Breast epithelium (tissue), 4 donors: ENCODE measurements at regions of chr12 and their contacts with region 1.

Region 1: GRCh38 chr12:11007608-11008007 is 9.5 kb upstream of the TAS2R20 start:
- DNase-seq: no peak
- H3K4me3 ChIP-seq: no peak overlapping the region
- H3K27ac ChIP-seq: no peak overlapping the region
- H3K4me1 ChIP-seq: no peaks in the 10 kb centered on the region
- H3K27me3 ChIP-seq: no peaks in the 10 kb centered on the region
- CTCF ChIP-seq: no peak
- POLR2A ChIP-seq: no peak

Region 2: DNA sequence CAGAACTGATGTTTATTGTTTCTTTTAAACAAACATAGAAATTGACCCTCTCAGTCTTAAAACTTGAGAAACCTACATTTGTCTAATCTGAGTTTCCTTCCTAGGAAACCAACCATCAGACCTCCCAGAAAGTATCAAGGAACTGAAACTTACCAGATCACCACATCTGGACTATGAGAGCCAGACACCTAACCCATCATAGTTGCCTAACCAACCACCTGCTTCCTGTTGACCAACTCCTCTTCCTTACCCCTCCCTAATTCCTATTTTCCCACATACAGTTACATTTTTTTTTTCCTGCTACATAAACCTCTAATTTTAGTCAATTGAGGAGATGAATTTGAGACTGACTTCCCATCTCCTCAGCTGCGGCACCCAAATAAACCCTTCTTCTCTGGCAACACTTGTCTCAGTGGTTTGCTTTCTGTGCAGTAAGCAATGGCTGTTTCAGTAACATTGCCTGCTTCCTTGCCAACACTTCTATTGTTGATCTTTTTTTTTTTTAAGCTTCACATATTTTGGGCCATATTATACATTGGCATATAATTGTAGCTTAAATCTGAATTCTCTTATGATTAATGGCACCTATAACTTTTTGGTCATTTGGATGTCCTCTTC is 665.6 kb before region 1 on chr12:
- intact Hi-C with region 1: loop called (anchors 10 kb)
- DNase-seq: no peak
- H3K4me3 ChIP-seq: no peak overlapping the region
- H3K27ac ChIP-seq: no peak overlapping the region
- H3K4me1 ChIP-seq: no peaks in the 10 kb centered on the region
- H3K27me3 ChIP-seq: no peaks in the 10 kb centered on the region
- CTCF ChIP-seq: no peak
- POLR2A ChIP-seq: no peak